K562 (cell line): ENCODE measurements at regions of chr2 and their contacts with region 1.

Region 1: DNA sequence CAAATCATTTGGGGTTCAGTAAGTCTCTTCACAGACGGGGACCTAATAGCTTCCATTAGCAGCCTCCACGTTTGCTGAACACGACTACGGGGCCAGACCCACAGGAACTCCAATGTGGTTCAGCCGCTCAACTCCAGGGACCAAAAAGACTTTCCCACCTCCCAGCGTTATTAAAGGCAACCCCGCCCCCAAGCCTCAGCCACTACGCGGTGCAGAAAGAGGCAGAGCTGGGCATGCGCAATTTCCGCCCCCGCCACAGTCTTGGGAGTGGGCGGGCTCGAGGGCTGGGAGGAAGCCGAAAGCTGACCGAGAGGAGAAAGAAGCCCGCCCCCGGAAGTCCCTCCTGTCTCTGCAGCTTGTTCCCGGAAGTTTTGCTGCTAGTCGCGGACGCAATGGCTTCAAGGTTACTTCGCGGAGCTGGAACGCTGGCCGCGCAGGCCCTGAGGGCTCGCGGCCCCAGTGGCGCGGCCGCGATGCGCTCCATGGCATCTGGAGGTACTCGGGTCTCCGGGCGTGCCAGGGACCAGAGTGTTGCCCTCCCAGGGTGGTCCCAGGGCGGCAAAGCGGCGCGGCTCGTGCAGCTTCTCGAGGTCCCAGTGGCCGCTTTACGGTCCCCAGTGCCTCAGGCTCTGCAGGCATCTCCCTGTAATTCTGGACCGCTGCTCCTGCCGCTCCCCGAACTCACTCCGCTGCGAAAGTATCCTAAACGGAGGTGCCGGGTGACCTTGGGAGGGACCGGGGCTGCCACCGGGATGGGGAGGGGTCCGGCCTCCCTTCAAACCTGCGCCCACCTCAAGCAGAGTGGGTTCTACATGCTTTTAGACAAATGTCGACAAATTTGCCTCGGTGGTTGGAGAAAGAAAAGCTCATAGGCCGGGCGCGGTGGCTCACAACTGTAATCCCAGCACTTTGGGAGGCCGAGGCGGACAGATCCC is at the start of gene COX5B:
- DNase-seq: peak; percentile 96 to 99 (median 98)
- ATAC-seq: peak; percentile 95
- H3K4me3 ChIP-seq: peak within 1 kb of the TSS; percentile 81
- H3K27ac ChIP-seq: peak within 1 kb of the TSS; percentile 92
- H3K4me1 ChIP-seq: peaks cover 13 to 19% of the 10 kb centered on the region in 2 experiments
- H3K27me3 ChIP-seq: no peaks in the 10 kb centered on the region
- CTCF ChIP-seq: peak in 1 of 3 experiments; percentile 14; a peak in 1 of 6 replicates
- EP300 ChIP-seq: 0 out of 2 replicates have a peak, but pooled peaks have one; percentile 13
- POLR2A ChIP-seq: peak; percentile 96
- RAD21 ChIP-seq: no peak; a peak in 1 of 4 replicates
- polyA plus RNA-seq, gene COX5B: 305 to 487 TPM

Region 2: GRCh38 chr2:97663965-97664635 is 18.1 kb after region 1 on chr2 and contains the start of gene ACTR1B:
- CTCF ChIA-PET with region 1: no interaction called
- POLR2A ChIA-PET with region 1: interaction called, 135 read pairs
- in situ Hi-C with region 1: no loop called
- intact Hi-C with region 1: loop called (anchors 1 kb)
- DNase-seq: peak; percentile 94 to 99 (median 96)
- ATAC-seq: peak; percentile 93
- H3K4me3 ChIP-seq: peak within 1 kb of the TSS; percentile 66
- H3K27ac ChIP-seq: peak within 1 kb of the TSS; percentile 98
- H3K4me1 ChIP-seq: peaks cover 21 to 43% of the 10 kb centered on the region in 2 experiments; a peak in 4 of 5 replicates
- H3K27me3 ChIP-seq: no peaks in the 10 kb centered on the region
- CTCF ChIP-seq: peak; percentile 56 to 71 (median 69)
- EP300 ChIP-seq: 0 out of 2 replicates have a peak, but pooled peaks have one; percentile 0
- POLR2A ChIP-seq: peak; percentile 92
- RAD21 ChIP-seq: peak; percentile 47 to 59
- polyA plus RNA-seq, gene ACTR1B: 0.49 to 2.3 TPM